Activated CD4-positive, alpha-beta memory T cell treated with anti-CD3 and anti-CD28 coated beads for 36 hours (primary cell): ENCODE measurements at regions of chr6 and their contacts with region 1.

Region 1: GRCh38 chr6:6676910-6677441 is 88.5 kb downstream of the LY86 start:
- DNase-seq: peak; percentile 88
- H3K4me3 Mint-ChIP-seq: no peak overlapping the region
- H3K27ac Mint-ChIP-seq: no peak overlapping the region
- H3K4me1 Mint-ChIP-seq: peaks cover 6% of the 10 kb centered on the region
- H3K27me3 Mint-ChIP-seq: no peaks in the 10 kb centered on the region

Region 2: DNA sequence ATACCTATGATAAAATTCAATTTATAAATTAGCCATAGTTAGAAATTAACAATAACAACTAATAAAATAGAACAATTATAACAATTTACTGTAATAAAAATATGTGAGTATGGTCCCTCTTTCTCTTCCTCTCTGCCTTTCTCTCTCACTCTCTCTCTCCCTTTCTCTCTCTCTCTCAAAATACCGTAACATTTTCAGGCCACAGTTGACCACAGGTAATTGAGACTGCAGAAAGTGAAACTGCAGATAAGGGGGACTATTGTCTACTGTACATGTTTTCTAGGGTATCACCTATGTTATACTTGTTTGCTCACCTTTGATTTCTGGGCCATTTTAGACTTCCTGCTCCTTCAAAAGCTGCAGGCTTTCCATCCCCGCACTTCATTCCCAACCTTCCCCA is 41.7 kb before region 1 on chr6:
- CTCF ChIA-PET with region 1: no interaction called
- POLR2A ChIA-PET with region 1: no interaction called
- intact Hi-C with region 1: no loop called
- DNase-seq: no peak
- H3K4me3 Mint-ChIP-seq: no peak overlapping the region
- H3K27ac Mint-ChIP-seq: no peak overlapping the region
- H3K4me1 Mint-ChIP-seq: peaks cover 12% of the 10 kb centered on the region
- H3K27me3 Mint-ChIP-seq: no peaks in the 10 kb centered on the region

Region 3: GRCh38 chr6:6665555-6666243 is 11.3 kb before region 1 on chr6:
- CTCF ChIA-PET with region 1: interaction called, 15 read pairs
- POLR2A ChIA-PET with region 1: no interaction called
- intact Hi-C with region 1: no loop called
- DNase-seq: no peak
- H3K4me3 Mint-ChIP-seq: no peak overlapping the region
- H3K27ac Mint-ChIP-seq: no peak overlapping the region
- H3K4me1 Mint-ChIP-seq: peaks cover 2% of the 10 kb centered on the region
- H3K27me3 Mint-ChIP-seq: peaks cover 8% of the 10 kb centered on the region

Region 4: GRCh38 chr6:6696867-6697531 is 20.0 kb after region 1 on chr6:
- CTCF ChIA-PET with region 1: interaction called, 13 read pairs
- POLR2A ChIA-PET with region 1: no interaction called
- intact Hi-C with region 1: no loop called
- DNase-seq: peak; percentile 57
- H3K4me3 Mint-ChIP-seq: no peak overlapping the region
- H3K27ac Mint-ChIP-seq: no peak overlapping the region
- H3K4me1 Mint-ChIP-seq: no peaks in the 10 kb centered on the region
- H3K27me3 Mint-ChIP-seq: peaks cover 25% of the 10 kb centered on the region

Region 5: DNA sequence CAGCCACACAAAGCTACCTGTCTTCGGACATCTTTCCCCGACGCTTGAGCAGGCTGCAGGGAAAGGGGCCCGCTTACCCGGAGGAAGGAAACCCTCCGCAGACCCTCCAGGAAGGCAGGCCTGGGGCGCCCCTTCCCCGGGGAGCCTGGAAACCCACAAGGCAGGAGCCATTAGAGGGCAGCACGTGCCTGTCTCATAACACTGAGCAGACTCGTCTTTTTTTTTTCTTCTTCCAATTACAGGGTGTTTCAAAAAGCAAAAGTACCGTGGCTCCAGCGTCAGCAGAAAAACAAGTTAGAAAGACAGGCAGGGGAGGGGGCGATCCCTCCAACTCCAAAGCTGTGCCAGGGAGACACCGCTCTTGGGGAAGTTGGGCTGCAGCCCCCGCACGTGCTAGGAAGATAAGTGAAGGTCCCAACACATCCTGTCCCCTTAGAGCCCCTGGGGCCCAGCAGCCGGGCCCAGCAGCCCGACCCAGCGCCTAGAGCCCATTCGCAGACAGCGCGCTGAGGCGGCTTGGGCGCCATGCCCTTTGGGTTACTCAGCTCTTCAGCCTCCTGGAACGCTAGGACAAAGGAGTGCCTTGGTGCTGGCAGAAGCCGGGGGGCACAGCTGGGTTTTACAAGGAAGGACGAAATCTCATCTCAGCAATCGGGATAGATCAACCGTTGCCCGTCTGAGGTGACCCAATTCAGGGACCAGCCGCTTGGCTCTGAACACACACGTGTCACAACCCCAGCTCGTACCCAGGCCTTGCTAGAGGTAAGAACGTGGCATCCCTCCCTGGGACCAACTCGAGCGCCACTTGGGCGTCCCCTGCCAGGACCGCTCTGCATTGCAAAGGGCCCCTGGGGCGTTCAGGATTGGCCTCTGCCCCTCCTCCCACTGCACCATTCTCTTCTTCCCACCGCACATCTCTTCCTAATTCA is 47.8 kb after region 1 on chr6:
- CTCF ChIA-PET with region 1: interaction called, 9 read pairs
- POLR2A ChIA-PET with region 1: no interaction called
- intact Hi-C with region 1: loop called (anchors 5 kb)
- DNase-seq: peak; percentile 67
- H3K4me3 Mint-ChIP-seq: no peak overlapping the region
- H3K27ac Mint-ChIP-seq: no peak overlapping the region
- H3K4me1 Mint-ChIP-seq: peaks cover 4% of the 10 kb centered on the region
- H3K27me3 Mint-ChIP-seq: peaks cover 8% of the 10 kb centered on the region

Region 6: DNA sequence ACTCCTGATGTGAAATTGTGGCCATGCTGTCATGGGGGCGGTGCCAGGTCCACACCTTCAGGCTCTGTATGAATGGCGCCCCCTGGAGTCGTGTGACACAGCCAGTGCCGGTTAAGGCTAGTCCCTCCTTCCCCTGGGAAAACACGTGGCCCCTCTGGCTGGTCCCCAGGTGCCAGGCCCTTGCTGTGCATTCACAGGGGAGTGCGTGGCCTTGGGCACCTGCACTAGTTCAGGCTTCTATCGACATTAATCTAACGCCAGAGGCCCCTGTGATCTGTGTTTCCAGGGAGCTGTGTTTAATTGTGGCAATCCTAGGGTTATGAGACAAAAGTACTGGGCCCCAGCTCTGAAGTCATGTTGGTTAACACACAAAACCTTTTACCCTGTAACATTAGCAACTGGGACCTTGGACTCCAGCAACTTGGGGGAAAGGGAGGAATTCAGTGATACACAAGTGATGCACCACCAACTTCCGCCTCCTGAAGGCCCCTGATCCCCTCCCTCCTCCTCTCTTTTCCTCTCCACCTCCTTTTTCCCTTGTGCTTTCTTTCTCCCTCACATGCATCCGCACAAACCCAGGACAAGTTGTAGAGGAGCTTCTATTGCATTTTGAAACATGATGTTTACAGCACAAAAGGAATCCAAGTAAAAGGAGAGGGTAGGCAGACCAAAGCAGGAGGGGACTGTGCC is 562.1 kb after region 1 on chr6:
- CTCF ChIA-PET with region 1: interaction called, 32 read pairs
- POLR2A ChIA-PET with region 1: no interaction called
- intact Hi-C with region 1: loop called (anchors 1 kb)
- DNase-seq: peak; percentile 86
- H3K4me3 Mint-ChIP-seq: no peak overlapping the region
- H3K27ac Mint-ChIP-seq: no peak overlapping the region
- H3K4me1 Mint-ChIP-seq: peaks cover 20% of the 10 kb centered on the region
- H3K27me3 Mint-ChIP-seq: no peaks in the 10 kb centered on the region